CD4-positive, alpha-beta memory T cell (primary cell): ENCODE measurements at regions of chr1 and their contacts with region 1.

Region 1: DNA sequence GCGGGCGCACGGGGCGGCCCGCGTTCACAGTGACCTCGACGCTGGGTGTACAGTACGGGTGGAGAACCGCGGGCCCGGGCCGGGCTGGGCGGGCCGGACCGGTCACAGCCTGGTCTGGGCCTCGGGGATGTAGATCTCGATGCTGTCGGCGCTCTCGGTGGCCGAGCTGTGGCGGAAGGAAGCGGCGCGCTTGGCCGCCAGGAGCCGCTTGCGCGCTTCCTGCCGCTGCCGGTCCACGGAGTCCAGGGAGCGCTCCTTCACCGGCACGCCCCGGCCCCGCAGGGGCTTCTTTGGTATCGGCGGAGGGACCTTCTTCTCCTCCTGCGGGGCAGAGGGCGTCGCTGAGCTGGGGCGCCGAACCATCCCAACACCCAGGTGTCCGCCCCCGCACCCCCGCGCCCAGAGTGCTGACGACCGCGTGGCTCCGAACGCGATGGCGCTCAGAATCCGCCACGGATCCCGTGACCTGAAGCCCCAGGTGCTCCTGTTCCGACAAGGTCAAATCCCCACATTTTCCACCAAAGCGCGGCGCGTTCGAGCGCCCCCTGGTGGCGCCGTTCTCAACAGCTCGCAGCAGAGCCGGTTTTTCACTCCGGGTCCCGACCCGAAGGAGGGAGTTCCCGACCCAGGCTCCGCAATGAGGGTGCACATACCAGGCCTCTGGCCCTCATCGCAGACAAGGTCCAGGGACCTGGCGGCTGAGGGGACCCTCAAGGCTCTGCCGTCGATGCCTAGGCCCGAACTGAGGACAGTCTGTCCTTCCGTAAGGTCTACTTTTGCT is 6.6 kb upstream of the SMIM12 start:
- DNase-seq: peak; percentile 85 to 92 (median 91)
- H3K4me3 ChIP-seq: peak overlapping the region; percentile 61 to 69
- H3K4me3 Mint-ChIP-seq: peak overlapping the region; percentile 85 to 92 (median 88)
- H3K27ac ChIP-seq: peak overlapping the region; percentile 74
- H3K27ac Mint-ChIP-seq: peak overlapping the region; percentile 86 to 95 (median 92)
- H3K4me1 ChIP-seq: peaks cover 36% of the 10 kb centered on the region
- H3K4me1 Mint-ChIP-seq: peaks cover 20 to 56% (median 34%) of the 10 kb centered on the region in 4 donors
- H3K27me3 ChIP-seq: no peaks in the 10 kb centered on the region
- H3K27me3 Mint-ChIP-seq: peaks cover 1 to 3% of the 10 kb centered on the region in 2 donors

Region 2: GRCh38 chr1:34786521-34787325 is 79.4 kb before region 1 on chr1:
- CTCF ChIA-PET with region 1: interaction called, 6 read pairs
- POLR2A ChIA-PET with region 1: no interaction called
- intact Hi-C with region 1: loop called (anchors 1 kb)
- DNase-seq: peak; percentile 41 to 58 (median 45)
- H3K4me3 ChIP-seq: no peak overlapping the region
- H3K4me3 Mint-ChIP-seq: no peak overlapping the region
- H3K27ac ChIP-seq: no peak overlapping the region
- H3K27ac Mint-ChIP-seq: peak overlapping the region in 2 of 7 donors; percentile 1 to 34
- H3K4me1 ChIP-seq: peaks cover 3% of the 10 kb centered on the region
- H3K4me1 Mint-ChIP-seq: peaks cover 0 to 6% (median 3%) of the 10 kb centered on the region in 4 donors
- H3K27me3 ChIP-seq: peaks cover 6% of the 10 kb centered on the region
- H3K27me3 Mint-ChIP-seq: peaks cover 14 to 52% of the 10 kb centered on the region in 2 donors